ENCODE measurements at regions of chr7 and their contacts with region 1.

Region 1: GRCh38 chr7:116173051-116174028 is 37.0 kb upstream of the TES start:
- DNase-seq: peak; percentile 83
- ATAC-seq: peak; percentile 37
- H3K4me3 ChIP-seq: peak overlapping the region; percentile 48
- H3K27ac ChIP-seq: peak overlapping the region; percentile 55
- H3K4me1 ChIP-seq: peaks cover 35% of the 10 kb centered on the region
- H3K27me3 ChIP-seq: no peaks in the 10 kb centered on the region
- CTCF ChIP-seq: peak; percentile 72

Region 2: GRCh38 chr7:115721293-115722217 is 451.8 kb before region 1 on chr7:
- CTCF ChIA-PET with region 1: no interaction called
- POLR2A ChIA-PET with region 1: no interaction called
- intact Hi-C with region 1: no loop called
- DNase-seq: no peak
- ATAC-seq: no peak
- H3K4me3 ChIP-seq: no peak overlapping the region
- H3K27ac ChIP-seq: no peak overlapping the region
- H3K4me1 ChIP-seq: no peaks in the 10 kb centered on the region
- H3K27me3 ChIP-seq: peaks cover 41% of the 10 kb centered on the region
- CTCF ChIP-seq: no peak

Region 3: DNA sequence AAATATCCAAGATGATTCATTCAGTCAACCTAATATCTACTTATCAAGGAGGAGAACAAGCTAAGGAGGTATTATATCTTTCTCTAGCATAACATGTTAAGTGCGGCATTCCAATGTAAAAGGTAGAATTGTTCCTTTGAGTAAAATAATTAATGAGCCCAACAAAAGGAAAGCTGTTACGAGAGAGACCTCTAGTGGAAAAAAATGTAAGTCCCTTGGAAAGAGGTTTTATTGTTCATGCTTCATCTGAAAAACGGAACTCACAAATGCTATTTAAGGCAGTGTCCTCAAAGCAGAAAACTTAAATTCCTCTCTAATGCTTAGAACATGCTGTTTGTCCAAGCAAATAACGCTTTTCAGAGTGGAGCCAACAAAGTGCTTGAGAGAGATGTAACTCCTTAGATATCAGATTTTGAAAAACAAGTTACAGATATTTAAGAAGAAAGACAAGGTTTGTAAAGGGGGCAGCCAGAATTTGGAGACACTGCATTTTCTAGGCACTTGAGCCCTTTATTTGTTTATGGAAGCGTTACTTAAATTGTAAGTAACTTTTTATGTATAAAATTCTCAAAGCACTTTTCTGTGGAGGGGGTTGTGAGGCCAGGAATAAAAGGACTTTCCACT is 262.7 kb before region 1 on chr7:
- CTCF ChIA-PET with region 1: no interaction called
- POLR2A ChIA-PET with region 1: no interaction called
- intact Hi-C with region 1: no loop called
- DNase-seq: peak; percentile 53
- ATAC-seq: peak; percentile 54; the same call in 1 of the 2 replicates
- H3K4me3 ChIP-seq: no peak overlapping the region
- H3K27ac ChIP-seq: no peak overlapping the region
- H3K4me1 ChIP-seq: no peaks in the 10 kb centered on the region
- H3K27me3 ChIP-seq: peaks cover 82% of the 10 kb centered on the region
- CTCF ChIP-seq: peak; percentile 73

Region 4: DNA sequence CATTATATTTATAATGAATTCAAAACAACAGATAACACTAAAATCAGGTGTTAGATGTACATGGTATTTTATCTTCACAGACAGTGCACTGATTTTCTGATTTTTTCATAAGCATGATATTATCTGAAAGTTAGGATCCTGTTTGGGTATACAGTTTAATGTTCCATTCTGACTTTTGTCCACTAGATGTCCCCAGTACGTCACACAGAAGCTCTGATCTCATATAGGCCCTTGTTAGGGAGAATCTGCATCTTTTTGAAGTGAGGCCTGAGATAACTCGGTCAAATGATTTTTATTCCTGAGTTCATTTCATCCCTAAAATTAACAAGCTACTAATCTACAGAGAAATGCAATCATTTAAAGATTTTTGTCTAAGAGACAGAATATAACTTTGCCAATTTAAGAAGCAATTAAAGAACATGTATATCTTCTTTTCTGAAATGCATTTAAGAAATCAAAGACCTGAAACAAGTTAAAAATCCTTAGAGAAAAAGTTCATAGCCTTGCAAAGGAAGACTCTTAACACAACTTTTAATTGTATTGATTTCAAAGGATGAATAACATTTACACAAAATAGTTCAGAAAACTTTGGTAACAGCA is 35.0 kb before region 1 on chr7:
- CTCF ChIA-PET with region 1: interaction called, 8 read pairs
- POLR2A ChIA-PET with region 1: no interaction called
- intact Hi-C with region 1: loop called (anchors 1 kb)
- DNase-seq: peak; percentile 82
- ATAC-seq: peak; percentile 87
- H3K4me3 ChIP-seq: no peak overlapping the region
- H3K27ac ChIP-seq: peak overlapping the region; percentile 21; the same call in 1 of the 2 replicates
- H3K4me1 ChIP-seq: peaks cover 14% of the 10 kb centered on the region
- H3K27me3 ChIP-seq: no peaks in the 10 kb centered on the region
- CTCF ChIP-seq: peak; percentile 92

Region 5: DNA sequence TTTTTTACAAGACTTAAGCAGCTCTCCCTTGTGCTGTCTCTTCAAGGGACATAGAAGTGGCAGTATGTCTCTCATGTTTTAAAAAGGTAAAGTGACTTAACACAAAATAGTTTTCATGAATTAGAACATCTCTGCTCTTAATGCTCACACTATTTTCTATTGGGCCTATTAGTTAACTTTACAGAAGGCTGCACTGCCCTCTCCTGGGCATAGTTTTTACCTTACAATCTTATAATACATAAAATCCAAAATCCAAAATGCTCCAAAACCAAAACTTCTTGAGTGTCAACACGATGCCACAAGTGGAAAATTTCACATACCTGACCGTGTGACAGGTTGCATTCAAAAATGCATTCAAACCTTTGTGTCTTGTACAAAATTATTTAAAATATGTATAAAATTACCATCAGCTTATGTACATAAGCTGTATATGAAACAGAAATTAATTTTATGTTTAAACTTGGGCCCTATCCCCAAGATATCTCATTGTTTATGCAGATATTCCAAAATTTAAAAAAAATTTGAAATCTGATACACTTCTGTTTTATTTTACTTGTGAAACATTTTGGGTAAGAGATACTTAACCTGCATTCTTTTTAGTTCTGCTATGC is 62.8 kb after region 1 on chr7:
- CTCF ChIA-PET with region 1: interaction called, 3 read pairs
- POLR2A ChIA-PET with region 1: no interaction called
- intact Hi-C with region 1: loop called (anchors 2 kb)
- DNase-seq: peak; percentile 70
- ATAC-seq: peak; percentile 42
- H3K4me3 ChIP-seq: no peak overlapping the region
- H3K27ac ChIP-seq: no peak overlapping the region
- H3K4me1 ChIP-seq: peaks cover 26% of the 10 kb centered on the region
- H3K27me3 ChIP-seq: no peaks in the 10 kb centered on the region
- CTCF ChIP-seq: peak; percentile 72

Region 6: DNA sequence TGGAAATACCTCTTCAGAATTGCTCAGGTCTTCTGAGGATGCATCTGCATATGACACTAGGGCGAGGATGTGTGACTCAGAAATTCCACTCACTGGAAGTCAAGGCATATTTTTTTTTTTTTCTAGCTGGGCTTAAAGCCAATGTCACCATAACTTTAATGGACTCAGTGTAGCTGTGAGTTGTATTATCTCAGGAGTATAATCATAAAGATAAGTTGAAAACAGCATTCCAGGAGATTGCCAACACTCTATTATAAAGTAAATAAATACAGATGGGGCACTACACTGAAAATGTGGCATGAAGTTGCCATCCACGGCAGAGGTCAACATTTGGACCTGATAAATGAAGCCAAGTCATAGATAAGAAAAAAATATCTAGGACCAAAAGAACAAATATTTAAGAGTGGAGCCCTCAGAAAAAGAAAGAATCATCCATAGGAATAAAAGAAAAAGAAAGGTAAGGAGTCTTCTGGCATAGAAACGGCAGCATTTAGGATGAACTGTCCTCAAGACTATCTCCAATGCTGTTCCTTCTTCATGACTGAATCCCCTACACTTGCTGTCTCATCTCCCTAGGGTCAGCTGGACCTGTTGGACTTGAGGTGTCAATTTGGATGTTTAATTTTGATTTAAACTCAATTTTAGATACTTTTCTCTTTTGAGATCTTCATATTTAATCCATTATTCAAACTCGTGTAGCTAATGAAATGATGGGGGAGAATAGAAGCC is 253.3 kb after region 1 on chr7:
- CTCF ChIA-PET with region 1: no interaction called
- POLR2A ChIA-PET with region 1: no interaction called
- intact Hi-C with region 1: loop called (anchors 5 kb)
- DNase-seq: peak; percentile 96
- ATAC-seq: peak; percentile 70
- H3K4me3 ChIP-seq: no peak overlapping the region
- H3K27ac ChIP-seq: peak overlapping the region; percentile 52
- H3K4me1 ChIP-seq: peaks cover 30% of the 10 kb centered on the region
- H3K27me3 ChIP-seq: no peaks in the 10 kb centered on the region
- CTCF ChIP-seq: no peak

Region 7: GRCh38 chr7:116809636-116810266 is 636.4 kb after region 1 on chr7:
- CTCF ChIA-PET with region 1: no interaction called
- POLR2A ChIA-PET with region 1: no interaction called
- intact Hi-C with region 1: loop called (anchors 1 kb)
- DNase-seq: peak; percentile 87
- ATAC-seq: peak; percentile 82
- H3K4me3 ChIP-seq: peak overlapping the region; percentile 42
- H3K27ac ChIP-seq: peak overlapping the region; percentile 76
- H3K4me1 ChIP-seq: peaks cover 38% of the 10 kb centered on the region
- H3K27me3 ChIP-seq: no peaks in the 10 kb centered on the region
- CTCF ChIP-seq: peak; percentile 85